ENCODE measurements at regions of chr7 and their contacts with region 1.

Region 1: GRCh38 chr7:66844552-66845378 is 76.3 kb upstream of the TMEM248 start:
- DNase-seq: peak; percentile 100
- H3K4me3 Mint-ChIP-seq: peak overlapping the region; percentile 99
- H3K27ac Mint-ChIP-seq: peak overlapping the region; percentile 97
- H3K4me1 Mint-ChIP-seq: peaks cover 22% of the 10 kb centered on the region
- H3K27me3 Mint-ChIP-seq: peaks cover 4% of the 10 kb centered on the region

Region 2: GRCh38 chr7:66493235-66494181 is 351.3 kb before region 1 on chr7:
- intact Hi-C with region 1: loop called (anchors 2 kb)
- DNase-seq: peak; percentile 99
- H3K4me3 Mint-ChIP-seq: peak overlapping the region; percentile 92
- H3K27ac Mint-ChIP-seq: peak overlapping the region; percentile 95
- H3K4me1 Mint-ChIP-seq: peaks cover 12% of the 10 kb centered on the region
- H3K27me3 Mint-ChIP-seq: no peaks in the 10 kb centered on the region

Region 3: GRCh38 chr7:66859794-66860645 is 15.3 kb after region 1 on chr7:
- intact Hi-C with region 1: loop called (anchors 1 kb)
- DNase-seq: peak; percentile 76
- H3K4me3 Mint-ChIP-seq: peak overlapping the region; percentile 85
- H3K27ac Mint-ChIP-seq: peak overlapping the region; percentile 100
- H3K4me1 Mint-ChIP-seq: peaks cover 18% of the 10 kb centered on the region
- H3K27me3 Mint-ChIP-seq: no peaks in the 10 kb centered on the region

Region 4: DNA sequence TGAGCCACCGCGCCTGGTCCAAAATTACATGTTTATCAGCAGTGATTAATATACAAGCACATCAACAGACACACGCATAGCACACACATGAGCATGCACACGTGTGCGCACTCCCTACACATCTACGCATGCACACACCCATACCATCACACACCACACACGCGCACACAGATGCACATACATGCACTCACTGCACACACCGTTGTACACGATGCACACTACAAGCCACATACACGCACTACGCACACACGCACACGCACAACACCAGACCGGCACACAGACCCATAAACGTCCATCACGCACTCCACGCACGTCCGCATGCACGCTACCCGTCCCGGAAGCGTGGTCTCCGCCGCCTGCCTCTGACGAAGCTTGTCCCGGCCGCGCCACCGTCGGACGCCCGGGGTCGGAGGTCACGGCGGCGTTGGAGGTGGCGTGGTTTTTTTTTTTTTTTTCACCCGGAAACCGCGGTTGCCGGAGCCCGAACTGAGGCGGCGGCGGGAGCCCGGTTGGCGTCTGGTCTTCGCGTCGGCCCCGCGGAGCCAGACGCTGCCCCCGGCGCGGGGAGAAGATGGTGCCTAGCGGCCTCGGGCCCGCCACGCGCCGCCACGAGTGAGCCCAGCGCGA is 76.1 kb after region 1 on chr7 and contains the start of gene TMEM248:
- intact Hi-C with region 1: loop called (anchors 1 kb)
- DNase-seq: peak; percentile 98
- H3K4me3 Mint-ChIP-seq: peak within 1 kb of the TSS; percentile 97
- H3K27ac Mint-ChIP-seq: peak within 1 kb of the TSS; percentile 98
- H3K4me1 Mint-ChIP-seq: peaks cover 21% of the 10 kb centered on the region
- H3K27me3 Mint-ChIP-seq: no peaks in the 10 kb centered on the region
- total RNA-seq, gene TMEM248: 88.4 and 92.2 TPM in 2 replicates

Measured in activated CD4-positive, alpha-beta T cell treated with anti-CD3 and anti-CD28 coated beads, Interleukin-2, amount 10 ng/mL, durations not matched to agents 24 days and 14 days (primary cell).